ENCODE measurements at regions of chr9 and their contacts with region 1.

Region 1: DNA sequence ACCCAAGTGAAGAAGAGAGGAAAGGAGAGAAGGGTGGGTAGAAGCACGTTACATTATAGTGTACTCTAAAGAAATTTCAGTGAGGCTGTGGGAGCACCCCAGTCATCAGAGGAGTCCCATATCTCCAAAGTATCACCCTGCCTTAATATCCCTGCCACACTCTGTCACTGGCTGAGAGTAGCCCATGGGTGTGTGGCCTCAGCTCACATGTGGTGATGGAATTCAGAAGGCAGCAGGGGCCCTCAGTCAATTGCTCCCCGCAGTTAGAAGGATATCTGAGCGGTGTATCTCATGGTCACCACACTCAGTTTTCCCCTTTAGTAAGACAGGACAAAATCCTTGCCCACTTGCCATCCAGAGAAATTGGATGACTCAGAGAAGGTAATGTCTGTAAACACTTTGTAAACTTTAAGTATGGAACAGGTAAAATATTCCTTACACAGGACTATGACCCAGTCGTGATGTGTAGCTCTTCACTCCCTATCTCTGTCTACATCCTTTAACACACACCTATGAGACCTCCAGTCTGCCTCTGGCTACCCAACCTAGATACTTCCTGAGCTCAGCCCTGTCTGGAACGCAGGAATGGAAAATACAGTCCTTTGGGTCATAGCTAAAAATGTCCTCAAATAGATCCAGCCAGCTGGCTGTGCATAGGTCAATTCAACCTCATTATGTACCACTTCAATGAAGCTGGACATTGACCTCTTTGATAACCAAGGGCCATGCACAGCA is 24.3 kb upstream of the PLIN2 start:
- DNase-seq: peak; percentile 66 to 76
- H3K4me3 ChIP-seq: no peak overlapping the region
- H3K4me3 Mint-ChIP-seq: peak overlapping the region; percentile 49
- H3K27ac Mint-ChIP-seq: peak overlapping the region; percentile 89
- H3K4me1 ChIP-seq: peaks cover 54% of the 10 kb centered on the region
- H3K4me1 Mint-ChIP-seq: peaks cover 38% of the 10 kb centered on the region
- H3K27me3 ChIP-seq: no peaks in the 10 kb centered on the region
- H3K27me3 Mint-ChIP-seq: no peaks in the 10 kb centered on the region
- CTCF ChIP-seq: no peak

Region 2: DNA sequence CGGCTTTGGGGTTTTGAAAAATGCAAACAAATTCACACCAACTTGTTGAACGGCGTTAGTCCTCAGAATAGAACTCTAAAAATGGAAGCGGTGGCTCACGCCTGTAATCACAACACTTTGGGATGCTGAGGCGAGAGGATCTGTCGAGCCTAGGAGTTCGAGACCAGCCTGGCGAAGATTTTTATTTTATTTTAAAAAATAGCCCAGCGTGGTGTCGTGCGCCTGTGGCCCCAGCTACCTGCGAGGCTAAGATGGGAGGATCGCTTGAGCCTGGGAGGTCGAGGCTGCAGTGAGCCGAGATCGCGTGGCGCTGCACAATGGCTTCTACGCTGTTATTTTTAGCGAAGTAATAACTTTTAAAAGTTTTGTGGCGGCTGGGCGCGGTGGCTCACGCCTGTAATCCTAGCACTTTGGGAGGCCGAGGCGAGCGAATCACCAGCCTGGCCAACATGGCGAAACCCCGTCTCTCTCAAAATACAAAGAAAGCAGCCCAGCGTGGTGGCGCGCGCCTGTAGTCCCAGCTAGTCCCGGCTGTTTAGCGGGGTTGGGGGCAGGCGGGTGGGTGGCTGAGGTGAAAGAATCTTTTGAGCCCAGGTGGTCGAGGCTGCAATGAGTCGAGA is 23.6 kb before region 1 on chr9:
- CTCF ChIA-PET with region 1: no interaction called
- POLR2A ChIA-PET with region 1: interaction called, 6 read pairs
- intact Hi-C with region 1: loop called (anchors 1 kb)
- DNase-seq: peak; percentile 38
- H3K4me3 ChIP-seq: peak overlapping the region; percentile 53
- H3K4me3 Mint-ChIP-seq: peak overlapping the region; percentile 79
- H3K27ac Mint-ChIP-seq: peak overlapping the region; percentile 85
- H3K4me1 ChIP-seq: peaks cover 15% of the 10 kb centered on the region
- H3K4me1 Mint-ChIP-seq: peaks cover 8% of the 10 kb centered on the region
- H3K27me3 ChIP-seq: no peaks in the 10 kb centered on the region
- H3K27me3 Mint-ChIP-seq: no peaks in the 10 kb centered on the region
- CTCF ChIP-seq: no peak

Region 3: GRCh38 chr9:19137282-19137681 is 14.3 kb before region 1 on chr9:
- CTCF ChIA-PET with region 1: interaction called, 3 read pairs
- POLR2A ChIA-PET with region 1: no interaction called
- intact Hi-C with region 1: loop called (anchors 2 kb)
- DNase-seq: no peak
- H3K4me3 ChIP-seq: no peak overlapping the region
- H3K4me3 Mint-ChIP-seq: no peak overlapping the region
- H3K27ac Mint-ChIP-seq: no peak overlapping the region
- H3K4me1 ChIP-seq: no peaks in the 10 kb centered on the region
- H3K4me1 Mint-ChIP-seq: no peaks in the 10 kb centered on the region
- H3K27me3 ChIP-seq: no peaks in the 10 kb centered on the region
- H3K27me3 Mint-ChIP-seq: no peaks in the 10 kb centered on the region
- CTCF ChIP-seq: no peak